Mammary epithelial cell (primary cell): ENCODE measurements at regions of chr14 and their contacts with region 1.

Region 1: DNA sequence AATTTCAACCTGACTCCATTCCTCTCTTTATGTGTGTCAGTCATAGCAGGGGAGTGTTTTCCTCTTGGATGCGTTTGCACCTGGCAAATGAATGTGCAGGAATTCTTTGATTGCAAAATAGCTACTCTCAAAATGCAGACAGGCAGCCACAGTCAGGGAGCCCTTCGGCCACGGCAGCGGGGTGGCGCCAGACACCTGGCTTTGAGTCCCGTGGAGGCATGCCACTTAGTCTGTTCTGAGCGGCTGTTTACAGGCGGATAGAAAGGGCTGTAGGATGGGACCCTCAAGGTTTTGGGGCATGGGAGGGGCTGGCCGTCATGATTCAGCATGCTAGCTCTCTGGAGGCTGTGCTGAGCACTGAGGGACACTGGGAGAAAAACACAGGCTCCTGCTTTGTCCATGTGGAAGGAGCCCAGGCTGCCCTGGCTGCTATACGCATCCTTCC is 117.1 kb downstream of the SLC25A47 start:
- DNase-seq: peak; percentile 79
- H3K4me3 ChIP-seq: no peak overlapping the region
- H3K27ac ChIP-seq: peak overlapping the region; percentile 75
- H3K4me1 ChIP-seq: peaks cover 30% of the 10 kb centered on the region
- H3K27me3 ChIP-seq: no peaks in the 10 kb centered on the region
- CTCF ChIP-seq: peak; percentile 82 to 95

Region 2: GRCh38 chr14:100350276-100350926 is 89.8 kb before region 1 on chr14:
- CTCF ChIA-PET with region 1: no interaction called
- dilution Hi-C with region 1: no loop called
- in situ Hi-C with region 1: no loop called
- intact Hi-C with region 1: no loop called
- DNase-seq: no peak
- H3K4me3 ChIP-seq: no peak overlapping the region
- H3K27ac ChIP-seq: no peak overlapping the region
- H3K4me1 ChIP-seq: no peaks in the 10 kb centered on the region
- H3K27me3 ChIP-seq: no peaks in the 10 kb centered on the region
- CTCF ChIP-seq: no peak

Region 3: DNA sequence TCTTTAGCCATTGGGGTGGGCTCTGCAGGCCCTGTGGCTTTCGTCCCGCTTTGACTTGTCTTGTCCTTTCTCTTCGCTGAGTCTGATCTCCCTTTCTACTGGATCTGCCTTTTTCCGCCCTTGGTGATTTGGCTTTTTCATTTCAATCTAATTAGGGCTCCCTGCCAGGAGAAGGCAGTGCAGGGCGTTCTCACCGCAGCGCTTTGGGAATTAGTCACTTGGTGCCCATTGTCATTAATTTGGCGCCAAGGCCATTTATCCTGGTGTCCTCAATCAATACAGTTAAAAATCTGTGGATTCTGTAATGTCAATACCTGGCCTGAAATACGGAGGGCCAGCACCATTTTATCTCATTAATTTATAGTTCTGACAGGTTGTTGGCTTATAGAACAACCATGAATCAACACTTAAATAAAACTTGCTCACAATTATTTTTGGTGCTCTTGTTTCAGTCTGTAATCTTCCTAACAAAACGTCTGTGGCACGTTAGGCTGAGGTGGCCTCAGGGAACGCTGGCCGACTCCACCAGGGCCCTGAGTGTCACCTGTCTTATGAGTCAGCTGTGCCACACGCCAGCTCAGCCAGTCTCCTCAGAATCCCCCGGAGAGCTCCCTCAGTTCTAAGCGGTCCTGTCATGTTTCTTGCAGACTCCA is 31.4 kb after region 1 on chr14:
- CTCF ChIA-PET with region 1: no interaction called
- dilution Hi-C with region 1: no loop called
- in situ Hi-C with region 1: no loop called
- intact Hi-C with region 1: no loop called
- DNase-seq: no peak
- H3K4me3 ChIP-seq: no peak overlapping the region
- H3K27ac ChIP-seq: no peak overlapping the region
- H3K4me1 ChIP-seq: peaks cover 7% of the 10 kb centered on the region
- H3K27me3 ChIP-seq: no peaks in the 10 kb centered on the region
- CTCF ChIP-seq: no peak

Region 4: GRCh38 chr14:100533656-100534485 is 93.7 kb after region 1 on chr14:
- CTCF ChIA-PET with region 1: no interaction called
- dilution Hi-C with region 1: no loop called
- in situ Hi-C with region 1: no loop called
- intact Hi-C with region 1: no loop called
- DNase-seq: no peak
- H3K4me3 ChIP-seq: no peak overlapping the region
- H3K27ac ChIP-seq: no peak overlapping the region
- H3K4me1 ChIP-seq: peaks cover 25% of the 10 kb centered on the region
- H3K27me3 ChIP-seq: no peaks in the 10 kb centered on the region
- CTCF ChIP-seq: no peak

Region 5: GRCh38 chr14:100645192-100645990 is 205.2 kb after region 1 on chr14:
- CTCF ChIA-PET with region 1: interaction called, 9 read pairs
- dilution Hi-C with region 1: no loop called
- in situ Hi-C with region 1: no loop called
- intact Hi-C with region 1: loop called (anchors 1 kb)
- DNase-seq: peak; percentile 70
- H3K4me3 ChIP-seq: no peak overlapping the region
- H3K27ac ChIP-seq: no peak overlapping the region
- H3K4me1 ChIP-seq: peaks cover 4% of the 10 kb centered on the region
- H3K27me3 ChIP-seq: no peaks in the 10 kb centered on the region
- CTCF ChIP-seq: peak; percentile 74 to 83

Region 6: DNA sequence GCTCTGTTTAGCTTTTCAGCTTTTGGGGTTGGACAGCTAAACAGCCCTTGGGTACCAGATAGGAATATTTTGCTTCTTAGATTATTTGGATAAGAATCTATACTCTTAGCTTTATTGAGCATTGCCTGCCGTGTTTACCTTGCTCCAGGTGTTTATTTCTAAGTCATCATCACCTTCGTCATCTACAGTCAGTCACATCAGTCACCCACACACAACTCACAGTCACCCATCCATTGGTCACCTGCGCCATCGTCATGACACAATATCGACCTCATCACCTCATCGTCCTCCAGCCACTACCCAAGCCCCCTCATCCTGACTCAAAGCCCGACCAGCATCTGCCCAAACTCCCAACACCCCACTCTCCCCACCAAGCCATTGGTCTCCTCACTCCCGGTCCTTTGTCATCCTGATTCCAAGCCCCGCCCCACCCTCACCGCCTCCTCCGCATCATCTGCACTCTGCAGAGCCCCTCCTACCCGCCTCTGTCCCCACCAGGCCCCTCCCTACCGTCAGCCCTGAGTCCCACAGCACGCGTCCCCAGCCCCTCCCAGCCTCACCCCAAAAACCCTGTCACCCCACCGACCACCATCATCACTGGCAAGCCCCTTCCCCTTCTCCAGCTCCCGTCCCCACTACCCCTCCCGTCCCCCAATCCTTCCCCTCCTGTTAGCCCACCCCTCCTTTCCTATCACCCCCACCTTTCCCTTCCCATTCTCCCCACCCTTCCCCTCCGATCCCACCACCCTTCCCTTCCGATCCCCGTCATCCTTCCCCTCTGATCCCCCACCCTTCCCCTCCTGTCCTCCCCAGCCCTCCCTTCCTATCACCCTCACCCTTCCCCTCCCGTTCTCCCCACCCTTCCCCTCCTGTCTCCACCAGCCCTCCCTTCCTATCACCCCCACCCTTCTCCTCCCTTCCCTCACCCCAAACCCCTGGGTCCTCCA is 296.3 kb after region 1 on chr14:
- CTCF ChIA-PET with region 1: no interaction called
- dilution Hi-C with region 1: no loop called
- in situ Hi-C with region 1: no loop called
- intact Hi-C with region 1: no loop called
- DNase-seq: no peak
- H3K4me3 ChIP-seq: no peak overlapping the region
- H3K27ac ChIP-seq: no peak overlapping the region
- H3K4me1 ChIP-seq: no peaks in the 10 kb centered on the region
- H3K27me3 ChIP-seq: peaks cover 4% of the 10 kb centered on the region
- CTCF ChIP-seq: no peak

Region 7: DNA sequence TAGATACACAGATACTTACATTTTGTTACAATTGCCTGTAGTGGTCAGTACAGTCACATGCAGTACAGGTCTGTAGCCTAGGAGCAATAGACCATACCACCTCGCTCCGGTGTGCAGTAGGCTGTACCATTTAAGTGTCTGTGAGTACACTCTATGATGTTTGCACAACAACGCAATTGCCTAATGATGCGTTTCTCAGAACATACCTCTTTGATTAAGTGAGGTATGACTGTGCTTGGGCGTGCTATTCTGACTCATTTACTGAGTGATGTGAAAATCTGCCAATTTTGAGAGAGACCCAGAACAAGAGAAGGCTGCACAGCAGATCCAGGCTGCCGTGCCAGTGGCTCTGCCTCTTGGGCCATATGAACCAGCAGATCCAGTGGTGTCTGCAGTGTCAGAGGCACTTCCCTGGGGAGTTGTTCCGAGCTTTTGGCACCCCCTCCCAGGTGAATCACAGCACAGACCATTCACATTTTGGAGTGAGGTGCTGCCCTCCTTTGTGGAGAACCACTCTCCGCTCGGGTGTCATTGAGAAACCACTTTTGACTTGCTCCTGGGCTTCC is 306.9 kb after region 1 on chr14:
- CTCF ChIA-PET with region 1: no interaction called
- dilution Hi-C with region 1: no loop called
- in situ Hi-C with region 1: no loop called
- intact Hi-C with region 1: loop called (anchors 1 kb)
- DNase-seq: peak; percentile 95
- H3K4me3 ChIP-seq: no peak overlapping the region
- H3K27ac ChIP-seq: peak overlapping the region; percentile 59
- H3K4me1 ChIP-seq: peaks cover 5% of the 10 kb centered on the region
- H3K27me3 ChIP-seq: no peaks in the 10 kb centered on the region
- CTCF ChIP-seq: no peak

Region 8: DNA sequence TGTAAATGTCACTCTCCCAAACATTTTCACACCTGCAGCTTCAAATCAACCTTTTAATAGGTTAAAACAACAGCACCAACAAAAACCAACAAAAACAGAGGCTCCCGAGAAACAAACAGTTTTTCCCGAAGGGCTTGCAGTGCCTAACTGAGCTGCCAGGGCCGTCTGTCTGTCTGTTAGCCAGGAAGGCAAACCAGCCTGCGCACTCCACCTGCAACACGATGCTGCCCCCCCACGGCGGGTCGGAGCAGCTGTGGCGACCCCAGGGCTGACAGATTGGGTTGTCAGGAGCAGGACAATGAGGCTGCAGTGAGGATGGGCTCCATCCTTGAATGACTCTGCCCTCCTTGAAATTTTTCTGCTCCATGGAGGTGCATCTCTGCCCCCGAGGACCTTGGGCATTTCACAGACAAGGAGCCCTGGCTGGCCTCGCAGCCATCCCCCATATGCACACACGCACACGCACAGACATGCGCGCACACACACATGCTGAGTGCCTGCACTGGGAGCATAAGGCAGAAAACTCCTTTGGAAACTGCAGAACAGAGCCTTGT is 460.7 kb after region 1 on chr14:
- CTCF ChIA-PET with region 1: no interaction called
- dilution Hi-C with region 1: no loop called
- in situ Hi-C with region 1: no loop called
- intact Hi-C with region 1: loop called (anchors 5 kb)
- DNase-seq: no peak
- H3K4me3 ChIP-seq: no peak overlapping the region
- H3K27ac ChIP-seq: no peak overlapping the region
- H3K4me1 ChIP-seq: no peaks in the 10 kb centered on the region
- H3K27me3 ChIP-seq: peaks cover 2% of the 10 kb centered on the region
- CTCF ChIP-seq: peak in 1 of 2 donors; percentile 29